Breast epithelium (tissue), 4 donors: ENCODE measurements at regions of chr15 and their contacts with region 1.

Region 1: GRCh38 chr15:57085267-57085666 is 166.8 kb downstream of the TCF12 start:
- DNase-seq: no peak
- H3K4me3 ChIP-seq: no peak overlapping the region
- H3K27ac ChIP-seq: no peak overlapping the region
- H3K4me1 ChIP-seq: no peaks in the 10 kb centered on the region
- H3K27me3 ChIP-seq: no peaks in the 10 kb centered on the region
- CTCF ChIP-seq: no peak
- POLR2A ChIP-seq: no peak

Region 2: DNA sequence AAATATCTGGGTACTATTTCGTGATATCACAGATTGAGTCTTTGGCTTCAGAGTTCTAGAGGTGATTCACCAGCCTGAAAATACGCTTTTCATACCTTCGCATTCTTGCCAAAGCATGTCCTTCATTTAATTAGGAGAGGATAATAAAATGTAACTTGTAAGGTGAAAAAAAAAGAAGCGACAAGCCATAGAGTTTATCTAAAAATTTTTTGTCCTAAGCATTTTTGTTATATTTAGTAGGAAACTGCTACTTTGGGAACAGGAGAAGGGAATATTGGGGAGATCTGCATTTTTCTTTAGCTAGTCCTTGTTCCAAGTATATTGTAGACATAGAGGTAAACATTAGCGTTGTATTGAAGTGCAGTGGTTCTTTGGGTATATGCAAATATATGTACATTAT is 46.8 kb before region 1 on chr15:
- intact Hi-C with region 1: loop called (anchors 2 kb)
- DNase-seq: no peak
- H3K4me3 ChIP-seq: no peak overlapping the region
- H3K27ac ChIP-seq: no peak overlapping the region
- H3K4me1 ChIP-seq: no peaks in the 10 kb centered on the region
- H3K27me3 ChIP-seq: no peaks in the 10 kb centered on the region
- CTCF ChIP-seq: no peak
- POLR2A ChIP-seq: no peak